ENCODE measurements at regions of chr1 and their contacts with region 1.

Region 1: DNA sequence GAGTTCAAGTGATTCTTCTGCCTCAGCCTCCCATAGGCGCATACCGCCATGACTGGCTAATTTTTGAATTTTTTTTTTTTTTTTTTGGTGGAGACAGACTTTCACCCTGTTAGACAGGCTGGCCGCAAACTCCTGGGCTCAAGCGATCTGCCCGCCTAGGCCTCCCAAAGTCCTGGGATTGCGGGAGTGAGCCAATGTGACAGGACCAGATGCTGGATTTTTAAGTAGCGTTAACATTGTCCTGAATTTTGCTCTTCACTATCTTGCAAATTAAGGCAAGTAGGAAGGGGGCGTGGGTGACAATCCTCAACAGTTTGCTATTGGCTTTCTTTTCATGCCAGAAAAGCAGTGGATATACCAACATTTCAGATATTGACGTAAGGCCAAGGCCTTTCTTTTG is 49.7 kb upstream of the TSNAX start:
- DNase-seq: no peak
- ATAC-seq: no peak
- H3K4me3 ChIP-seq: no peak overlapping the region
- H3K27ac ChIP-seq: no peak overlapping the region
- H3K4me1 ChIP-seq: no peaks in the 10 kb centered on the region
- H3K27me3 ChIP-seq: no peaks in the 10 kb centered on the region
- CTCF ChIP-seq: no peak
- POLR2A ChIP-seq: no peak

Region 2: GRCh38 chr1:231460614-231461013 is 18.2 kb before region 1 on chr1:
- intact Hi-C with region 1: loop called in 1 of 10 experiments (anchors 2 kb)
- DNase-seq: no peak
- ATAC-seq: no peak
- H3K4me3 ChIP-seq: no peak overlapping the region
- H3K27ac ChIP-seq: no peak overlapping the region
- H3K4me1 ChIP-seq: peaks cover 0 to 13% (median 0%) of the 10 kb centered on the region in 12 donors
- H3K27me3 ChIP-seq: peaks cover 0 to 57% (median 0%) of the 10 kb centered on the region in 9 donors
- CTCF ChIP-seq: no peak
- POLR2A ChIP-seq: no peak

Measured in heart left ventricle (tissue), 16 donors.